Right lobe of liver (tissue), 6 donors: ENCODE measurements at regions of chr6 and their contacts with region 1.

Region 1: GRCh38 chr6:31356946-31357466 is at the start of gene HLA-B:
- DNase-seq: peak; percentile 77 to 84 (median 83)
- ATAC-seq: peak; percentile 91 to 96 (median 95)
- H3K4me3 ChIP-seq: peak within 1 kb of the TSS; percentile 40 to 55 (median 49)
- H3K27ac ChIP-seq: peak within 1 kb of the TSS; percentile 60 to 88 (median 80)
- H3K4me1 ChIP-seq: no peaks in the 10 kb centered on the region
- H3K27me3 ChIP-seq: no peaks in the 10 kb centered on the region
- CTCF ChIP-seq: no peak
- POLR2A ChIP-seq: peak; percentile 86
- total RNA-seq, gene HLA-B: 232 to 1,122 (median 585) TPM

Region 2: DNA sequence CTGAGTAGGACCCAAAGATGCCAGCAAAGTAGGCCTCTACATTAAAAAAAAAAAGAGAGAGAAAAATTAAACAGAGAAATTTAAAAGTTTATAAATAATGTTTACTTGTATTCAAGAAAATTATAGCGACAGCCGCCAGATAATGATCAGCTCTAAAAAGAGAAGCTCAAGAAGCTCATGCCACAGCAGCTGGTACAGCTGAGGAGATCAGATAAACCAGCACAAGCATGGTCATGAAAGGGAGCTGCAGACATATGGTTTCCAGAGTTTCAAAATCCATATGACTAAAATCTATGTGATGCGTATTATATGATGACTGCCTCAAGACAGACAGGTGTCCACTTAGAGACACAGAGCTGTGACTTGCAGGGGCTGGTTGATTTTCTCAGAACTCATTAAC is 71.5 kb before region 1 on chr6:
- intact Hi-C with region 1: loop called in 1 of 2 experiments (anchors 10 kb)
- DNase-seq: no peak
- ATAC-seq: no peak
- H3K4me3 ChIP-seq: no peak overlapping the region
- H3K27ac ChIP-seq: no peak overlapping the region
- H3K4me1 ChIP-seq: no peaks in the 10 kb centered on the region
- H3K27me3 ChIP-seq: no peaks in the 10 kb centered on the region
- CTCF ChIP-seq: no peak
- POLR2A ChIP-seq: no peak

Region 3: DNA sequence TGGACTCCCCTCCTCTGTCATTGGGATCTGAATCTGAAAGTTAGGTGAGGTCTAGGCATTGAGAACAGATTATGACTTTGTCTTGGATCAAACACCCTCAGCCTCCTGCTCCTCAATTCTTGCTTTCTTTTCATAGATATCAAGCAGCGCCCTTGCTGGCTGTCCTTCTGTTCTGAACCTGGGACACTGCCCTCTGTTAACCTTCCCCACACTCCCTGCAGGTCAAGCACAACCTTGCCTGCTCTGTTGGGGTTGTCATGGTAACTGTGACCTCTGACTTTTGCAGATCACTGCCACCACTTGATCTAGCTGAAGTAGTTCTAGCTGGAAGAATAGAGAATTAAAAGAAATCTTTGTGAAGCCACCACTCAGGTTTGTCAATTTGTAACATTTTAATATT is 30.0 kb after region 1 on chr6:
- intact Hi-C with region 1: no loop called
- DNase-seq: peak; percentile 44 to 85 (median 76)
- ATAC-seq: peak; percentile 91 to 94 (median 94)
- H3K4me3 ChIP-seq: no peak overlapping the region
- H3K27ac ChIP-seq: peak overlapping the region in 1 of 3 donors; percentile 54
- H3K4me1 ChIP-seq: peaks cover 0 to 12% (median 0%) of the 10 kb centered on the region in 4 donors
- H3K27me3 ChIP-seq: no peaks in the 10 kb centered on the region
- CTCF ChIP-seq: peak in 1 of 4 donors; percentile 7
- POLR2A ChIP-seq: no peak